ENCODE measurements at regions of chr2 and their contacts with region 1.

Region 1: DNA sequence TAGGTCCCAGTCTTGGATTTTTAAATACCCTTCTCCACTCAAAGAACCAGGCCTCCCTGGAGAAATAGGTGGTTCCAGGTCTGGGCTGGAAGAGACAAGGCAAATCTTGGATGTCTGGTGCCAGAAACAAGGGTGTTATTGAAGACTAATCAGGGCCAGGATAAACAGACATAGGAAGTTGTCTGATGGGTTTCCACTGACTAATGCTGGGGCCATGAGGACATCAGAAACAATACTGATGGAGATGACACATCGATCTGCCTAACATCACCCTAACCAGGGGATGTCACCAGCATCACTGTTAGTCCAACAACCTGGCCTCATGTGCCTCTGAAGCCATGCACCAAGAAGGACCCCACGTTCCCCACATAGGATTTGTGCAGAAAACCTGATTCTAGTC is 42.5 kb upstream of the GLI2 start:
- DNase-seq: peak in 1 of 10 donors; percentile 3

Region 2: DNA sequence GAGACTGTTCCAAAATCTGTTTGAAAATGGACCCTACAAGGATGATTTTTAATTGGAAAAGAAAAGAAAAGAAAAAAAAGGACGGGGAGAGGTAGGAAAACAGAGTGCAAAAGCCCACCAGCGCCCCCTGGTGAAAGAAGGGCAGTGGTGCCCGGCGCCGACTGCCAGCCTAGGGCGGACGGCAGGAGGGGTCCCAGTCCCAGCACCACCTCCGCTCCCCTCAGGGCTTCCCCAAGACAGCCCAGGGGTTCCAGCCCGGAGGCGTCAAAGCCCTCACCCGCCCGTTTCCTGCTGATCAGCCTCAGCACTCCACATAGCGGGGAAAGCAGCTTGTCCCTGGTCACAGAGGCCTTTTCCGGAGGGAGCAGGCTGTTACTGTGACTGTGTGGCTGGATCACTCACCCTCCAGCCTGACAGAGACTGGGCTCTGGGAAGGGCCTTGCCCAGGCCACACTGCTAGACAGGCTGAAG is 377.9 kb after region 1 on chr2:
- intact Hi-C with region 1: loop called (anchors 2 kb)
- DNase-seq: peak; percentile 47 to 93 (median 74)

Region 3: GRCh38 chr2:121076885-121077549 is 383.9 kb after region 1 on chr2:
- intact Hi-C with region 1: loop called (anchors 1 kb)
- DNase-seq: peak in 4 of 10 donors; percentile 26 to 57 (median 42)

Measured in posterior cingulate gyrus (tissue), 11 donors.